ENCODE measurements at regions of chr7 and their contacts with region 1.

Region 1: GRCh38 chr7:105652359-105652993 is 71.2 kb upstream of the EFCAB10 start:
- DNase-seq: peak; percentile 94
- ATAC-seq: peak; percentile 81
- H3K4me3 Mint-ChIP-seq: peak overlapping the region; percentile 8; the same call in 1 of the 2 replicates
- H3K27ac Mint-ChIP-seq: peak overlapping the region; percentile 97
- H3K4me1 Mint-ChIP-seq: peaks cover 98% of the 10 kb centered on the region
- H3K27me3 Mint-ChIP-seq: no peaks in the 10 kb centered on the region
- CTCF ChIP-seq: peak; percentile 74

Region 2: GRCh38 chr7:105131033-105131656 is 521.3 kb before region 1 on chr7:
- CTCF ChIA-PET with region 1: no interaction called
- POLR2A ChIA-PET with region 1: no interaction called
- DNase-seq: no peak
- ATAC-seq: no peak; the same call in 1 of the 2 replicates
- H3K4me3 Mint-ChIP-seq: no peak overlapping the region
- H3K27ac Mint-ChIP-seq: no peak overlapping the region
- H3K4me1 Mint-ChIP-seq: 0 out of 2 replicates have a peak, but pooled peaks cover 4% of the 10 kb centered on the region
- H3K27me3 Mint-ChIP-seq: no peaks in the 10 kb centered on the region
- CTCF ChIP-seq: no peak

Region 3: DNA sequence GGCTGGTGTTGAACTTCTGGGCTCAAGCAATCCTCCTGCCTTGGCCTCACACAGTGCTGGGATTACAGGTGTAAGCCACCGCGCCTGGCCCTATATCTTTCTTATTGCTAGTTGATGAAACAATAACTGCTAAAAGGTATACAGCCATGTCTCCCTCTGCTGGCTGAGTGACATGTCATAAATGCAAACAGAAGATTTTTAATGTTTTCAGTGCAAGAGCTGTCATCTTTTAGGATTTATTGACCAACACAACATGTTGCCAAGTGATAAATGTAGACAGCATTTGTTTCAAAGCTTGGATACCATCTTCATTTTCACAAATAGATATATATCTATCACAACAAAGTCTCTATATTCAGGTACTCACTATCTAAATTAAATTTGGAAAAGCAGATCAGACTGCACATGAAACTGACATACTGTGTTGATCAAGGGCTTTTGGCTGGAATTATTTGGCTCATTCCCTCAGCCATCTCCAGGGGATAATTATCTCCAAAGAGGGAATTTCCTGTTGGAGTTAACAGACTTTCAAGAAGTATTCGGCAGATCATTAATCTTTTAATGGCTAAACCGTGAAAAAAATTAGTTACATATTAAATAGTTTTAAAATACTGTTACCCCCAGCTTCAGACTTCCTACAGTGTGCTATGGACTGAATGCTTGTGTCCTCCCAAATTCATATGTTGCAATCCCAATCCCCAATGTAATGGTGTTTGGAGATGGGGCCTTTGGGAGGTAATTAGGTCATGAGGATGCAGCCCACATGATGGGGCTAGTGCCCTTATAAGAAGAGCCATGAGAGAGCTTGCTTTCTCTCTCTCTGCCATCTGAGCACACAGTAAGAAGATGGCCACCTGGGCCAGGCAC is 222.5 kb before region 1 on chr7:
- CTCF ChIA-PET with region 1: no interaction called
- POLR2A ChIA-PET with region 1: no interaction called
- DNase-seq: peak; percentile 20
- ATAC-seq: peak; percentile 83
- H3K4me3 Mint-ChIP-seq: no peak overlapping the region
- H3K27ac Mint-ChIP-seq: no peak overlapping the region
- H3K4me1 Mint-ChIP-seq: no peaks in the 10 kb centered on the region
- H3K27me3 Mint-ChIP-seq: no peaks in the 10 kb centered on the region
- CTCF ChIP-seq: no peak

Region 4: GRCh38 chr7:105493923-105494315 is 158.6 kb before region 1 on chr7:
- CTCF ChIA-PET with region 1: no interaction called
- POLR2A ChIA-PET with region 1: no interaction called
- DNase-seq: no peak
- ATAC-seq: no peak
- H3K4me3 Mint-ChIP-seq: no peak overlapping the region
- H3K27ac Mint-ChIP-seq: no peak overlapping the region
- H3K4me1 Mint-ChIP-seq: no peaks in the 10 kb centered on the region
- H3K27me3 Mint-ChIP-seq: no peaks in the 10 kb centered on the region
- CTCF ChIP-seq: no peak

Region 5: DNA sequence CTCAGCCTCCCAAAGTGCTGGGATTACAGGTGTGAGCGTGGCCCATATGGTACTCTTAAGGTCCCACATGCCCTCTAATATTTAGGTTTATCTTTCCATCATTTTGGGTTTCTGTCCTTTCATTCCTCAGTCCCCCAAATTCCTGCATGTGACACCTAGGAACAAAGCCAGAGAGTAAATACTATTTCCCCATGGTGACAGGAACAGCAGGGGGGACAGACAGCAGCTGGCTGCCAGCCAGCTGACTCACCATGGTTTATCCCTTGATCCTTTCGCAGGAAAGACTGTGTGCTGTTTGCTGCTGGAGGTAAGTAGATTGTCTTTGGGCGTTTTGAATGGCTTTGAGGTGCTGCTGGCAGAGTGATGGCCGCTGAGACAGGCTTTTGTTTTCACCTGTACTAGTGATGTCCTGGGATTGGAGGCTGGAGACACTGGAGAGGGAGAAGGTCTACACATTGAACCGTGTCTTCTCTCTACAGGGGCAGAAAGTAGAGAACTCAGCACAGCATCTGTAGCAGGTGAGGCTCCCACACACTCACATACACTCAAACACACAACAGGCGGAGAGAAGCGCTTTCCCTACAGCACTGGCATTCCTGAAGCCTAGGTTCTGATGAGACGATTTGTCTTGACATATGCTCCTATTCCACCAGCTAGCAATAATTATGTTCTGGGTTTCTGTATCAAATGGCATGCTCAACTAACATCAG is 12.5 kb after region 1 on chr7:
- CTCF ChIA-PET with region 1: interaction called, 54 read pairs
- POLR2A ChIA-PET with region 1: no interaction called
- DNase-seq: peak; percentile 56
- ATAC-seq: peak; percentile 79
- H3K4me3 Mint-ChIP-seq: no peak overlapping the region
- H3K27ac Mint-ChIP-seq: peak overlapping the region; percentile 90
- H3K4me1 Mint-ChIP-seq: peaks cover 31% of the 10 kb centered on the region
- H3K27me3 Mint-ChIP-seq: no peaks in the 10 kb centered on the region
- CTCF ChIP-seq: no peak

Region 6: DNA sequence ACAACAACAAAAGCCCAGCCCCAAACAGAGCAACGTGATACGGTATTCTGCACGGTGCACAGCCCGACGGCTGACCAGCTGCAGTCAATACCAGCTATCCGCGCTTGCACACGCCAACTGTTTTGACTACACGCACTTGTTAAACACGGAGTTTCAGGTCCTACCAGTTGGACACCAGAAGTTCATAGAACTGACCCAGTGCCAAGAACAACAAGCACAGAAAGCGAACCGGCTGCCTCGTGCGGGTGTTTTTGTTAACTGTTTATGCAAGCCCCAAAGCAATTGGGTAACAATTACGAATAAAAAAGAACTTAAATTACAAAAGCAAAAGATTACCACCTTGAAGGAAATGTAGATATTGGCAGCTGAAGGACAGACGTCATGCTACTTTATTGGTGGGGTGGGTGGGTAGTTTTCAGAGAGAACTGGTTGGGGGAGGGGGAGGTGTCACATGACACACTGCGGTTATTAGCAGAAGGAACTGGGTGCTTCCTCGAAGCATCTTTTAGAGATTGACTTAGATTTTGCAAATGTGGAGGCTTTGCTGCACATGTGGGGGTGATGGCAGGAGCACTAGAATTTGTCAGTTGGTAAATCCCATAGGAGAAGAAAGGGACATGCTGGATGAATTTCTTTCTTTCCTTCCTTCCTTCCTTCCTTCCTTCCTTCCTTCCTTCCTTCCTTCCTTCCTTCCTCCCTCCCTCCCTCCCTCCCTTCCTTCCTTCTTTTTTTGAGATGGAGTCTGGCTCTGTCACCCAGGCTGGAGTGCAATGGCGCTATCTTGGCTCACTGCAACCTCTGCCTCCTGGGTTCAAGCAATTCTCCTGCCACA is 39.5 kb after region 1 on chr7:
- CTCF ChIA-PET with region 1: interaction called, 35 read pairs
- POLR2A ChIA-PET with region 1: interaction called, 3 read pairs
- DNase-seq: peak; percentile 23
- ATAC-seq: no peak
- H3K4me3 Mint-ChIP-seq: peak overlapping the region; percentile 74
- H3K27ac Mint-ChIP-seq: peak overlapping the region; percentile 99
- H3K4me1 Mint-ChIP-seq: peaks cover 89% of the 10 kb centered on the region
- H3K27me3 Mint-ChIP-seq: no peaks in the 10 kb centered on the region
- CTCF ChIP-seq: no peak

Region 7: DNA sequence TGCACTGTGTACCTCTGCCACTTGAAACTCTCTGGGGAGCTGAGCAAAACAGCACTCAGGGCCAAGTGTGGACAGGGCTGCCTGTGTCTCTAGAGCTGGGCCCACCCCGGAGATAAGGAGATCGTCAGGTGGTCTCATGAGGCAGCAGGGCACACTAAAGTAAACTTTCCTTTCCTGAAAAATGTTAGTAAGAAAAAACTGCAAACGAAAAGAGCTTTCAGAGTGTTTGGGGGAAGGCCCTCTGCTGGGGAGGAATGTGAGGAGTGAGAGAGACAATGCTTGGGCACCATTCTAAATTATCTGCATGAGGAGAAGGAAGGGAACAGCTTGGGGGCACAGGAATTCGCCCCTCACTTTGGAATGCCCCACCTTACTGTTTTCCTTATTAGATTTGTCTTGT is 96.2 kb after region 1 on chr7:
- CTCF ChIA-PET with region 1: interaction called, 19 read pairs
- POLR2A ChIA-PET with region 1: no interaction called
- DNase-seq: no peak
- ATAC-seq: peak; percentile 70
- H3K4me3 Mint-ChIP-seq: no peak overlapping the region
- H3K27ac Mint-ChIP-seq: peak overlapping the region; percentile 80
- H3K4me1 Mint-ChIP-seq: peaks cover 47% of the 10 kb centered on the region
- H3K27me3 Mint-ChIP-seq: no peaks in the 10 kb centered on the region
- CTCF ChIP-seq: no peak

Region 8: GRCh38 chr7:105769901-105770628 is 117.6 kb after region 1 on chr7:
- CTCF ChIA-PET with region 1: interaction called, 12 read pairs
- POLR2A ChIA-PET with region 1: no interaction called
- DNase-seq: no peak
- ATAC-seq: no peak
- H3K4me3 Mint-ChIP-seq: no peak overlapping the region
- H3K27ac Mint-ChIP-seq: no peak overlapping the region
- H3K4me1 Mint-ChIP-seq: peaks cover 90% of the 10 kb centered on the region
- H3K27me3 Mint-ChIP-seq: no peaks in the 10 kb centered on the region
- CTCF ChIP-seq: no peak

Region 9: GRCh38 chr7:105849122-105849855 is 196.8 kb after region 1 on chr7:
- CTCF ChIA-PET with region 1: interaction called, 11 read pairs
- POLR2A ChIA-PET with region 1: no interaction called
- DNase-seq: peak; percentile 56
- ATAC-seq: peak; percentile 90
- H3K4me3 Mint-ChIP-seq: peak overlapping the region; percentile 24
- H3K27ac Mint-ChIP-seq: peak overlapping the region; percentile 89
- H3K4me1 Mint-ChIP-seq: peaks cover 58% of the 10 kb centered on the region
- H3K27me3 Mint-ChIP-seq: no peaks in the 10 kb centered on the region
- CTCF ChIP-seq: no peak

Region 10: GRCh38 chr7:105934572-105935185 is 282.2 kb after region 1 on chr7:
- CTCF ChIA-PET with region 1: interaction called, 10 read pairs
- POLR2A ChIA-PET with region 1: no interaction called
- DNase-seq: peak; percentile 37
- ATAC-seq: peak; percentile 94
- H3K4me3 Mint-ChIP-seq: no peak overlapping the region
- H3K27ac Mint-ChIP-seq: no peak overlapping the region
- H3K4me1 Mint-ChIP-seq: peaks cover 25% of the 10 kb centered on the region
- H3K27me3 Mint-ChIP-seq: no peaks in the 10 kb centered on the region
- CTCF ChIP-seq: no peak

Measured in WTC11 (cell line).